Naive thymus-derived CD8-positive, alpha-beta T cell (primary cell): ENCODE measurements at regions of chr16 and their contacts with region 1.

Region 1: DNA sequence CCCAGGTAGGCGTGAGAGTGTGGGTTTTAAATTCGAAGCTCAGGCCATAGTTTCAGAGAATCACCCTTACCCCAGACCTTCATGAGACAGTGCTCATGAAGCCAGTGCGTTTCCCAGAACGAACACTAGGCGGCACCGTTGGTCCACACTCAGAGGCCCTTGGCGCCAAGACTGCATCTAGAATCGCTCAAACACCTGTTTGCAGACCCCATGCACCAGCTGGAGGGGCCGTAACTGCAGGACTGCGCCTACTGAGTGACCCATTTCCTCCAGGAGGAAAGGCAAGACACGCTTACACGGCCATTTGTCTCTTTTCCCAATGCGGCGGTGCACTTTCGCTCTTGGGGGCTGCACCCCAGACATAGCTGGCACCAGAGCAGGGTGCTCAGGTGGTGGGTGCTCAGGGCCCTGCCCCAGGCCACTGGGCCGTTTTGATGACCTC is 34.0 kb downstream of the ADGRG5 start:
- DNase-seq: peak; percentile 59 to 90 (median 78)
- ATAC-seq: peak; percentile 86 to 94
- H3K4me3 Mint-ChIP-seq: peak overlapping the region in 1 of 10 donors; percentile 48
- H3K27ac Mint-ChIP-seq: peak overlapping the region in 8 of 10 donors; percentile 61 to 91 (median 83)
- H3K4me1 Mint-ChIP-seq: peaks cover 31 to 49% (median 39%) of the 10 kb centered on the region in 4 donors
- H3K27me3 Mint-ChIP-seq: no peaks in the 10 kb centered on the region

Region 2: DNA sequence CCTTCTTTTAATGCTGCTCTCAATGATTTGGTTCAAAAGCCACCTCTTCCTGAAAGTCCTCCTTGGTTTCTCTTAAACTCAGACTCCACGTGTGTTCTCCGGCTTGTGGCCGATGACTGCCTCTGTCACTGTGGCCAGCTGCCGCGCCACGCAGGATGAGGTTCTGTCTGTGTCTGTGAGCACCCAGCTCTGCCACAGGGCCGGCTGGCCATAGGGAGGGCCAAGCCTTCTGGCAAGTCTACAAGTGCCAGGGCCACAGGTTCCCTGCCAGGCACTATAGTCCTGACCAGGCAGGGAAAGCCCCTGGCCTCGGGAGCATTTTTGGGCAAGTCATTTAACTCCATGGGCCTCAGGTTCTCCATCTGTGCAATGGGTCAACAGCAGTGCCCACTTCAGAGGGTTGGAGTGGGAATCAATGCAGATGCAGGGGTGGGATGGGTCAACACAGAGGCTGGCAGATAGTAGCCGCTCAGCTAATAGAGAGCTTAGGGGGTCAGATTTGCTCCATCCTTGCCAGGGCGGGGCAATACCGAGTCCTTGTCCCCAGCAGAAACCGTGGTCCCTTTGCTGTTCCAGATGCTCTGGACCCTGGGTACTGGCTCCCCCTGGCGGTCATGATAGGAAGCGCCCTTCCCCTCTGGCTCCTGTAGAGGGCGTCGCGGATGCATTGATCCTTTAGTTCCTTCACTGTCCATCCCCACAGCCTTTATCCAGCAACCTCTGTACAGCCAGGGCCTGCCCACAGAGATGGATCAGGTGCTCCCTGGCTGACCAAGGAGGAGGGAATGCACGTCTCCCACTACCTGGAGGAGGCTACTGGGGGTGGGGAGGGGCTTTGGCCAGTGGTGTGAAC is 72.4 kb after region 1 on chr16:
- POLR2A ChIA-PET with region 1: interaction called, 20 read pairs
- DNase-seq: peak; percentile 71 to 92 (median 82)
- ATAC-seq: peak; percentile 78 to 90
- H3K4me3 Mint-ChIP-seq: peak overlapping the region in 6 of 10 donors; percentile 36 to 88 (median 57)
- H3K27ac Mint-ChIP-seq: peak overlapping the region in 8 of 10 donors; percentile 42 to 90 (median 68)
- H3K4me1 Mint-ChIP-seq: peaks cover 23 to 47% (median 41%) of the 10 kb centered on the region in 4 donors
- H3K27me3 Mint-ChIP-seq: no peaks in the 10 kb centered on the region